PC-9 (cell line): ENCODE measurements at regions of chr19 and their contacts with region 1.

Region 1: DNA sequence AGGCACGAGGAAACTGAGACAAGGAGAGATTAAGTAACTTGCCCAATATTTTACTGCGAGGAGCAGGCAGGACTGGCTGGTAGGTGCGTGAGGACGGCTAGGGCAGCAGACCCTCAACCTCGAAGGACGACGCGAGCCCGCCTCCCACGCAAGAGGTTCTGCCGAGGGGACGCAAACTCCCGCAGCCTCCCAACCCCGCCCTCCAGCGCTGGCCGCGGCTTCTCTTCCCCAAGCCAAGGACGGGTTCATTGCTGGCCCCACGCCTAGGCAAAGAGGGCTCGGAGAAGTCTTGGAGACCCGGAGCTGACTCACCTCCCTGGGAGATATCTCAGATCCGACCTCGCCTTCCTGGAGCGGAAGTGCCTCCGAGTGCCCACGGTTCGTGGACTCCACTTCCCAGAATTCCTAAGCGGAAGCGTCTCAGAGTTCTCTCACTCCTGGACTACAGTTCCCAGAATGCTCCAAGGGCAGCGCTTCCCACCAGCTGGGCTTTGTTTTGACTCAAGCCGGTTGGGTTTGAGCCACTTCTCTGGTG is at the start of gene ZNF235:
- DNase-seq: peak; percentile 85 to 97
- H3K4me3 ChIP-seq: peak within 1 kb of the TSS; percentile 84
- H3K27ac ChIP-seq: peak within 1 kb of the TSS; percentile 49
- H3K4me1 ChIP-seq: peaks cover 10% of the 10 kb centered on the region; the same call in 1 of the 2 replicates
- H3K27me3 ChIP-seq: no peaks in the 10 kb centered on the region
- CTCF ChIP-seq: no peak
- total RNA-seq, gene ZNF235: 4.3 and 5.9 TPM in 2 replicates

Region 2: GRCh38 chr19:43983912-43984686 is 320.6 kb before region 1 on chr19 and contains the start of gene ZNF155:
- CTCF ChIA-PET with region 1: no interaction called
- POLR2A ChIA-PET with region 1: no interaction called
- intact Hi-C with region 1: loop called (anchors 10 kb)
- DNase-seq: peak; percentile 84 to 94
- H3K4me3 ChIP-seq: peak within 1 kb of the TSS; percentile 82
- H3K27ac ChIP-seq: 0 out of 2 replicates have a peak within 1 kb of the TSS, but pooled peaks have one; percentile 4
- H3K4me1 ChIP-seq: no peaks in the 10 kb centered on the region; the same call in 1 of the 2 replicates
- H3K27me3 ChIP-seq: no peaks in the 10 kb centered on the region
- CTCF ChIP-seq: no peak
- total RNA-seq, gene ZNF155: 5.0 and 6.1 TPM in 2 replicates

Region 3: DNA sequence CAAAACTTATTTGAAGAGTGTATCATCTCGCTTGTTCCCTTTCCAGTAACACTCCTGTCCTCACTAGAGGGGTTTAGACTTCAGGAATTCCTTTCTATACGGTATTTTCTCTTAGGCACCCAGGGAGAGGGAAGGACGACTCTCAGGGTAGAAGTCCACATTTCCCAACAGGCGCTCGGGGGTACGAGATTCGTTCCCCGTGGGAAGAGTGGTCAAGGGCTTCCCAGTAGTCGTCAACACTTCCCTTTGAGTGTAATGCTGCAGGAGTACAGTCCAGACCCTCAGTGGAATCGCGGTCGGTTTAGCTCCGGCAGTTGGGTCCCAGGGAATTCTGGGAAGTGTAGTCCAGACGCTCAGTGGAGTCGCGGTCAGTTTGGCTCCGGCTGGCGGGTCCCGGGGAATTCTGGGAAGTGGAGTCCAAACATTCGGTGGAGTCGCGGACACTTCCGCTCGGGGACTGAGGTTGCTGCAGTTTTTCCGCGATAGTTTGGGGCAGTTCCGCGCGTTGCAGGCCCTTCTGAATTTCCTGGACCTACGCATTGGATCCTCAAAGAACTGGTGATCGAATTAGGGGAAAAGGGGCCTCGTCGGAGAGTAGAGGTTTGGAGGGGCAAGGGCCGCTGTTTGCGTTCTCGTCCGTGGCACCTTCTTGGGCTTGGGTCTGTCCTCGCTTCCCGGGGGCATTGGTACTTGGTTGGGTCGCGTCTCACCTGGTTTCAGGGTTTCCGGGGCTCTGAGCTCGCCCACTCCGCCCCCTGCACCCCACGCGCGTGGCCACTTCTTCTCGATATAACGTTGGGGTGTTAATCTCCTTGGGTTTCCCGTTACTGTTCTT is 210.6 kb before region 1 on chr19 and contains the start of gene ZNF224:
- CTCF ChIA-PET with region 1: no interaction called
- POLR2A ChIA-PET with region 1: no interaction called
- intact Hi-C with region 1: no loop called
- DNase-seq: peak; percentile 85
- H3K4me3 ChIP-seq: peak within 1 kb of the TSS; percentile 65
- H3K27ac ChIP-seq: peak within 1 kb of the TSS; percentile 10; the same call in 1 of the 2 replicates
- H3K4me1 ChIP-seq: peaks cover 19% of the 10 kb centered on the region
- H3K27me3 ChIP-seq: no peaks in the 10 kb centered on the region
- CTCF ChIP-seq: no peak
- total RNA-seq, gene ZNF224: 29.3 and 30.9 TPM in 2 replicates

Region 4: GRCh38 chr19:44212250-44212865 is 92.4 kb before region 1 on chr19 and contains the start of gene ZNF227:
- CTCF ChIA-PET with region 1: no interaction called
- POLR2A ChIA-PET with region 1: no interaction called
- intact Hi-C with region 1: loop called (anchors 5 kb)
- DNase-seq: peak; percentile 84 to 89
- H3K4me3 ChIP-seq: peak within 1 kb of the TSS; percentile 94
- H3K27ac ChIP-seq: peak within 1 kb of the TSS; percentile 10; the same call in 1 of the 2 replicates
- H3K4me1 ChIP-seq: peaks cover 17% of the 10 kb centered on the region
- H3K27me3 ChIP-seq: no peaks in the 10 kb centered on the region
- CTCF ChIP-seq: no peak
- total RNA-seq, gene ZNF227: 14.2 and 16.5 TPM in 2 replicates

Region 5: DNA sequence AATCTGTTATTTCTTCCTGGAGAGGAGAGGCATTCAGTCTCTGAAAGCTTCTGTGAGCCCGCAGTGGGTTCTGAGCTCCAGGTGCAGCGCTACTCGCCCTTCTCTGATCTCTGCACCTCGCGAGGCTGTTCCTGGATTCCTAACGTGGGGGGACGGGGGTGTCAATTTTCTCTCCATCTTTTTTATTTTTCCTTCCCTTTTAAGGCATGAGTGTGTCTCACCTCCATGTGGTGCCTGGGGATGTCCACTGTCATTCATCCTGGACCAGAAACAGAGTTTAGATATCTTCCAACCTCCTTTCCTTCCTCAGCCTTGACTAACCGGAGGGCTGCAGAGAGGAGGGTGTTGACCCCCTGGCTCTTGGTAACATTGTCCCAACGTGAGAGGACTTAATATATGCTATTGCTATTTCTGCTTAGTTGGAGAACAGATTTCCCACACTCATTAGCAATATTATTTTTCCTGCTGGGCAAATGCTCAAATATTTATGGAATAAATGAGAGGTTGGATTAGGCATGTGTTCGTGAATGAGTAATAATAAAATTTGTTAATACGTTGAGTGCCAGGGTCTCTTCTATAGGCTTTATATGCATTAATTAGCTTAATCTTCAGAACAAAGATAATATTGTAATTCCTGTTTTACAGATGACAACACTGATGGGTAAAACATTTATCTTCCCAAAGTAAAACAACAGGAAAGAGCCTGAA is 44.2 kb before region 1 on chr19:
- CTCF ChIA-PET with region 1: no interaction called
- POLR2A ChIA-PET with region 1: no interaction called
- intact Hi-C with region 1: loop called (anchors 2 kb)
- DNase-seq: no peak
- H3K4me3 ChIP-seq: peak overlapping the region; percentile 50
- H3K27ac ChIP-seq: no peak overlapping the region
- H3K4me1 ChIP-seq: peaks cover 10% of the 10 kb centered on the region; the same call in 1 of the 2 replicates
- H3K27me3 ChIP-seq: no peaks in the 10 kb centered on the region
- CTCF ChIP-seq: no peak

Region 6: GRCh38 chr19:44315883-44316282 is 11.2 kb after region 1 on chr19:
- CTCF ChIA-PET with region 1: no interaction called
- POLR2A ChIA-PET with region 1: no interaction called
- intact Hi-C with region 1: no loop called
- DNase-seq: no peak
- H3K4me3 ChIP-seq: no peak overlapping the region
- H3K27ac ChIP-seq: no peak overlapping the region
- H3K4me1 ChIP-seq: no peaks in the 10 kb centered on the region
- H3K27me3 ChIP-seq: no peaks in the 10 kb centered on the region
- CTCF ChIP-seq: no peak

Region 7: DNA sequence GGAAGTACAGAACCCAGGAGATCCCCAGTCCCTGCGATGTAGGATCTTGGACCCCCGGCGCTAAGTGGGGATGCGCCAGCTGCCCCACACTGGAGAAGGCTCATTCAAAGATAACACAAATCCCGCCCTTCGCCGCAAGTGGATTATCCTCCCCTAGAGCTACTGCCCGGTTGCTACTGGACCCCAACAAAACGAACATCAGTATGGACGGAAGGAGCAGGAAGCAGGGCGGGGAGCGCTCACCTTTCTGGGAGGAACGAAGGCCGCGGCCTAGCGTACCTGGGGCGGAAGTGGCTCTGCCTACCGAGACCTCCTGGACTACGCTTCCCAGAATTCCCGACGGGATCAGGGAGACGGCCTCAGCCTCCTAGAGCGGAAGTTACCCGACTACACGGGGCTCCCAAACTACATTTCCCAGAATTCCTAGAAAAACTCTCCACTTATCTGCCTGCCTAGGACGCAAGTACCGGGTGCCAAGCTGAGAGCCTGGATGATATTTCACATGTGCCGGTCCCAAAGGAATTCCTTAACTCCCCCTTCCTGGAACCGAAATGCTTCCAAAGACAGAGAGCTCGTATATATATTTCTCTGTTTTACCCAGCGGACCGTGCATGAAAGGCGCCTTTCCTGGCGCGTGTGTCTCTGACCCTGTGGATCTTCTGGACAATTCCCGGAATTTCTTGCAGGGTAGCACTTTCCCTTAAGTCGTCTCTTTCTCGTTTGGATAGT is 51.8 kb after region 1 on chr19 and contains the start of gene ZNF112:
- CTCF ChIA-PET with region 1: no interaction called
- POLR2A ChIA-PET with region 1: no interaction called
- intact Hi-C with region 1: loop called (anchors 2 kb)
- DNase-seq: peak; percentile 87 to 94
- H3K4me3 ChIP-seq: peak within 1 kb of the TSS; percentile 86
- H3K27ac ChIP-seq: no peak within 1 kb of the TSS
- H3K4me1 ChIP-seq: peaks cover 7% of the 10 kb centered on the region; the same call in 1 of the 2 replicates
- H3K27me3 ChIP-seq: no peaks in the 10 kb centered on the region
- CTCF ChIP-seq: no peak
- total RNA-seq, gene ZNF112: 3.5 and 7.8 TPM in 2 replicates

Region 8: GRCh38 chr19:45323671-45324081 is 1019.0 kb after region 1 on chr19:
- CTCF ChIA-PET with region 1: interaction called, 19 read pairs
- POLR2A ChIA-PET with region 1: no interaction called
- intact Hi-C with region 1: no loop called
- DNase-seq: no peak
- H3K4me3 ChIP-seq: no peak overlapping the region
- H3K27ac ChIP-seq: no peak overlapping the region
- H3K4me1 ChIP-seq: no peaks in the 10 kb centered on the region; the same call in 1 of the 2 replicates
- H3K27me3 ChIP-seq: no peaks in the 10 kb centered on the region
- CTCF ChIP-seq: no peak